Activated B cell treated with CpG ODN at 0.5 μM for 24 hours (primary cell): ENCODE measurements at regions of chr1 and their contacts with region 1.

Region 1: DNA sequence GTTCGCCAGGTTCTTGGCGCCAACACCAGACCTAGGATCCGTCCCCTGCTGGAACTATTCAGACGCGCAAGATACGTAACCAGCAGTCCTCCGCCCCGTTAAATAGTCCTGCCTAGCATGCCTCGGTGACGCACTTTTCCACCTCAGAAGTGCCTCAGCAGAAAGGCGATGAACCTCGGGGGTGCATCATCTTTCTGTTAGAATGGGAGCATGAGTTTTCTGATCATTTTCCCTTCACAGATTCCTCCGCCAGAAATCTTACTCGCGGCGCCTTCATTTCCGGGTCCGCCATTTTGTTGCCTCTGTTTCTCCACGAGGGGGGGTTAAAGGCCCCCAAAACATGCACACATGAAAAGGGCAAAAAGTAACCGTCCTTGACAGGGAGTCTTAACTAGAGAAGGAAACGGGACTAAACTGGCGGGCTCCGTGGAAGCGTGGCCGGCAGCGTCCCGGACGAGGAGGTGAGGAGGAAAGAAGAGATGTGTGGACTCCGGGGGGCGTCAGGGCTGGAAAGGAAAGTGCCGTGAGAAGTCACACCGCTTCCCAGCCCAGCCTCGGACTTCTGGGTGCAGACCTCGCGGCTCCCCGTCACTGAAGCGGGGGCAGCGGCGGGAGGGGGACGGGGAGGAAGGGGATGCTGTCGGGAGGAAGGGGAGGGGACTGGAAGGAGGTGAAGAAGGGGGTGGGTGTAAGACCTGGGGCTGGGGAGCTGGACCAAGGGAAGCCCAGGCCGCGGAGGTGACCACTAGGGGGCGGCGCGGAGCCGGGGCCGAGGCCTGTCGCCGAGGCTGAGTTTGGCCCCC is at the start of gene GABPB2:
- DNase-seq: peak; percentile 89
- ATAC-seq: peak; percentile 87
- H3K4me3 Mint-ChIP-seq: peak within 1 kb of the TSS; percentile 97
- H3K27ac Mint-ChIP-seq: peak within 1 kb of the TSS; percentile 100
- H3K4me1 Mint-ChIP-seq: peaks cover 16% of the 10 kb centered on the region
- H3K27me3 Mint-ChIP-seq: no peaks in the 10 kb centered on the region
- CTCF ChIP-seq: peak; percentile 25
- total RNA-seq, gene GABPB2: 13.8 and 17.4 TPM in 2 replicates

Region 2: DNA sequence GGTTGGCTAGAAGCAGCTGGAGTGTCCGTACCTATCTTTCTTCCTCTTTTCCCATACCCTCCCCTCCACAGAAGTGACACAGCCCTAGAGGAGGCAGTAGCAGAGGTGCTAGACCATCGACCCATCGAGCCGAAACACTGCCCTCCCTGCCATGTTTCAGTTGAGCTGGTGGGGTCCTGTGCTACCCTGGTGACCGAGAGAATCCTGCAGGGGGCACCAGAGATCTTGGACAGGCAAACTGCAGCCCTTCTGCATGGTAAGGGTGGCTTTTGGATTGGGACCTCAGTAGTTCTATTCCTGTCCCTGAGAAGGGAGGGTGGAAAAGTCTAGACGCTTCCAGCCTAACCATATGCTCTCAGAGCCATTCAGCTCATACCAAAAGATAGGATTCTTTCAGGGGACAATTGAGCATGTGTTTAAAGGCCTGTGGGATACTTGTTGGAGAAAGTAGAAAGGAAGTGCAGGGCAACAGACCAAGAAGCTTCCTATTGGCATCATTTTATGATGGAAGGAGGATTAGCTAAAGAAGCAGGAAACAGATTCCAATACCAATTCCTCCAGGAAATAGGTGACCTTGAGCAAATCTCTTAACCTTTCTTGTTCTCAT is 46.0 kb before region 1 on chr1:
- CTCF ChIA-PET with region 1: interaction called, 7 read pairs
- POLR2A ChIA-PET with region 1: no interaction called
- intact Hi-C with region 1: loop called (anchors 1 kb)
- DNase-seq: peak; percentile 55
- ATAC-seq: peak; percentile 99
- H3K4me3 Mint-ChIP-seq: no peak overlapping the region
- H3K27ac Mint-ChIP-seq: no peak overlapping the region
- H3K4me1 Mint-ChIP-seq: peaks cover 6% of the 10 kb centered on the region
- H3K27me3 Mint-ChIP-seq: no peaks in the 10 kb centered on the region
- CTCF ChIP-seq: no peak

Region 3: GRCh38 chr1:151059078-151059907 is 11.4 kb before region 1 on chr1 and contains the start of gene CDC42SE1:
- CTCF ChIA-PET with region 1: interaction called, 12 read pairs
- POLR2A ChIA-PET with region 1: interaction called, 98 read pairs
- intact Hi-C with region 1: loop called (anchors 1 kb)
- DNase-seq: peak; percentile 82
- ATAC-seq: peak; percentile 88
- H3K4me3 Mint-ChIP-seq: peak within 1 kb of the TSS; percentile 98
- H3K27ac Mint-ChIP-seq: peak within 1 kb of the TSS; percentile 93
- H3K4me1 Mint-ChIP-seq: peaks cover 54% of the 10 kb centered on the region
- H3K27me3 Mint-ChIP-seq: no peaks in the 10 kb centered on the region
- CTCF ChIP-seq: no peak
- total RNA-seq, gene CDC42SE1: 139 and 148 TPM in 2 replicates

Region 4: DNA sequence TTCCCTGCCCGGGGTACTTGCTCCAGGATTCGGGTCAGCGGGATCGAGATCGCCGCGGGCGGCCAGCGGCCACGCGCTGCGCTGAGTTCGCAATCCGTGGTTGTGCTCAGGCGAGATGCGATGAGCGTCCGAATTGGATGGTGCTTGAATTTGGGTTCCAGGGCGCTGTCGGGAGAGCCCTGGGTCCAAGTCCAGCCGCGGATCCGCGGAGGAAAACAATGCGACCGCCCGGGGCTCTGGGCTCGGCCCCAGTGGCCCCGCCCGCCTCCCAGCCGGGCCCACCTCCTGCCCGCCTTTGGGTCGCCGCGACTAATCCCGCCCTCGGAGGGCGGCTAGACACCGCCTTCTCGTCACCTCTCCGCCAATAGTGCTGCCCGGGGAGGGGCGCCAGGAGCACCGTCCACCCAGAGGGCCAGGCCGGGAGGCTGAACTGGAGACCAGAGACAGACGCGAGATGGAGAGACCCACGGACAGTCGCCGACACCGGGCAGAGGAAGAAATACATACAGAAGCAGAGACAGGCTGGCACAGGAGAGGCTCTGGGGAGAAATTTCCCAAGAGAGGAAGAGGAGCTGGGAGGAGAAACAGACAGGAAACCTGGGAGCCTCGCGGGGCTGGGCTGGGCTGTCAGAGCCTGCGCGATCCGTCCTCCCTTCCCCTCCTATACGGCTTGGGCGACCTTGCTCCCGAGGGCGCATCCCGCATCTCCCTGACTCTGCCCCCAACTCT is 75.9 kb after region 1 on chr1 and contains the start of gene SEMA6C:
- CTCF ChIA-PET with region 1: no interaction called
- POLR2A ChIA-PET with region 1: interaction called, 5 read pairs
- intact Hi-C with region 1: loop called (anchors 1 kb)
- DNase-seq: peak; percentile 80
- ATAC-seq: peak; percentile 100
- H3K4me3 Mint-ChIP-seq: peak within 1 kb of the TSS; percentile 90
- H3K27ac Mint-ChIP-seq: no peak within 1 kb of the TSS
- H3K4me1 Mint-ChIP-seq: peaks cover 18% of the 10 kb centered on the region
- H3K27me3 Mint-ChIP-seq: peaks cover 7% of the 10 kb centered on the region
- CTCF ChIP-seq: no peak
- total RNA-seq, gene SEMA6C: 0.59 and 0.67 TPM in 2 replicates

Region 5: DNA sequence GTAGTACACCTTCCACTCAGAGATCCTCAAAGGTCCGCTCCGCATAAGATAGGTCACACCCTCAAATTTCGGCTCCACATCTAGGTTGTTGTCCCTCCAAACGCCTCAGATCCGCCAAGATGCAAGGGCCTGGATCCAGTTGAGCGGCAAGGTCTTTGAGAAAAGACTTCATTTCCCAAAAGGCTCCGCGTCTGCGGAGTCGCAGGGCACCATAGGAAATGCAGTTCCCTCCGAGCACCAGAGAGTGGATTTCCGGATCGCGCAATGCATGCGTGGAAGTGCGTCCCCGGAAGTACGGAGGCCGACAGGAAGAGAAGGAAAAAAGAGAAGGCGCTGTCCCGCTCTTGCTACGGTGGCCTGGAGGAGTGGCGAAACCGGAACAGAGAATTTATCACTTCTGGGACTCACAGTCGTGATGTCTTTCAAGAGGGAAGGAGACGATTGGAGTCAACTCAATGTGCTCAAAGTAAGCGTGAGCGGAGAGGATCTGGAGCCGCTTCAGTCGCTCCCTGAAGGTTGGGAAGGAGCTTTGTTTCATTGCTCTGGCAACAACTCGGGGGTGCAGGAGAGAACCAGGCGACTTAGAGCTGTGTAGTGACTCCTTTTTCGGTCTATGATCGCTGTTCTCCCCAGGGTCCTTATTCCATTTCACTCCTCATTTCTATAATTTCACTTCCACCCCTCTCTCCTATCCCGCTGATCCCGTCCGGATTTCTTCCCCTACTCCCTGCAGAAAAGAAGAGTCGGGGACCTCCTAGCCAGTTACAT is 95.2 kb after region 1 on chr1 and contains the starts of genes LYSMD1 and SCNM1:
- CTCF ChIA-PET with region 1: no interaction called
- POLR2A ChIA-PET with region 1: interaction called, 7 read pairs
- intact Hi-C with region 1: loop called (anchors 1 kb)
- DNase-seq: peak; percentile 87
- ATAC-seq: peak; percentile 96
- H3K4me3 Mint-ChIP-seq: peak within 1 kb of the TSS; percentile 92
- H3K27ac Mint-ChIP-seq: peak within 1 kb of the TSS; percentile 89
- H3K4me1 Mint-ChIP-seq: peaks cover 37% of the 10 kb centered on the region
- H3K27me3 Mint-ChIP-seq: no peaks in the 10 kb centered on the region
- CTCF ChIP-seq: no peak
- total RNA-seq, gene LYSMD1: 4.9 and 5.4 TPM in 2 replicates
- total RNA-seq, gene SCNM1: 52.8 and 58.2 TPM in 2 replicates